ENCODE measurements at regions of chr22 and their contacts with region 1.

Region 1: GRCh38 chr22:36856121-36856791 is 4.5 kb upstream of the NCF4 start:
- DNase-seq: peak; percentile 95
- ATAC-seq: peak; percentile 46
- H3K4me3 Mint-ChIP-seq: no peak overlapping the region
- H3K27ac Mint-ChIP-seq: peak overlapping the region; percentile 3
- H3K4me1 Mint-ChIP-seq: peaks cover 24% of the 10 kb centered on the region
- H3K27me3 Mint-ChIP-seq: peaks cover 5% of the 10 kb centered on the region
- CTCF ChIP-seq: peak; percentile 100

Region 2: GRCh38 chr22:36606114-36606513 is 250.1 kb before region 1 on chr22:
- CTCF ChIA-PET with region 1: no interaction called
- POLR2A ChIA-PET with region 1: no interaction called
- intact Hi-C with region 1: no loop called
- DNase-seq: no peak
- ATAC-seq: no peak
- H3K4me3 Mint-ChIP-seq: no peak overlapping the region
- H3K27ac Mint-ChIP-seq: no peak overlapping the region
- H3K4me1 Mint-ChIP-seq: no peaks in the 10 kb centered on the region
- H3K27me3 Mint-ChIP-seq: peaks cover 27% of the 10 kb centered on the region
- CTCF ChIP-seq: no peak

Region 3: DNA sequence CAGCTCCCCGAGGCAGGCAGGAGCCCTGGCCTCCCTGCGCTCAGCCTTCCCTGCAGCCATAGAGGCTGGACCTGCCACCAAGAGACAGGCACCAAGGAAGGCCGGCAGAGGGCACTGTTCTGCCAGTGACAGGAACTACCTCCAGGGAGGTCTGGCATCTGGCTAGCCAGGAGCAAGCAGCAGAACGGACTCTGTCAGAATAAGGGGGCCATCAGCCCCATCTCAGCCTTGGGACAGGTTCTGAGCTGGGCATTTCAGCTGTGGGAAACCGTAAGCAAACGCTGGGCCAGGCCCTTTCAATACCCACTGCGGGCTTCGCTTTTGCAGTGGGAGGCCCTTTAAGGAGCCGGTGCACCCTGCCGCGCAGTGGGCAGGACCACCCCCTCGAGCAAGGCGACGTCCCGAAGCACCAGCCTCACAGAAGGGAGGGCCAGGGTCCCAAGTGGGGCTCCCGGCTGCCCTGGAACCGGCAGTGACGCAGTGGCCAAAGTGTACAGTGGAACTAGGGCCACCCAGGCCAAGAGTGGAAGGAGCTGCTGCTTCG is 98.5 kb before region 1 on chr22:
- CTCF ChIA-PET with region 1: interaction called, 29 read pairs
- POLR2A ChIA-PET with region 1: no interaction called
- intact Hi-C with region 1: no loop called
- DNase-seq: peak; percentile 90
- ATAC-seq: peak; percentile 98
- H3K4me3 Mint-ChIP-seq: no peak overlapping the region
- H3K27ac Mint-ChIP-seq: no peak overlapping the region
- H3K4me1 Mint-ChIP-seq: no peaks in the 10 kb centered on the region
- H3K27me3 Mint-ChIP-seq: peaks cover 1% of the 10 kb centered on the region
- CTCF ChIP-seq: peak; percentile 83

Region 4: GRCh38 chr22:36781656-36782627 is 74.3 kb before region 1 on chr22:
- CTCF ChIA-PET with region 1: interaction called, 129 read pairs
- POLR2A ChIA-PET with region 1: interaction called, 3 read pairs
- intact Hi-C with region 1: loop called (anchors 2 kb)
- DNase-seq: peak; percentile 95
- ATAC-seq: peak; percentile 98
- H3K4me3 Mint-ChIP-seq: peak overlapping the region; percentile 53
- H3K27ac Mint-ChIP-seq: peak overlapping the region; percentile 94
- H3K4me1 Mint-ChIP-seq: peaks cover 34% of the 10 kb centered on the region
- H3K27me3 Mint-ChIP-seq: no peaks in the 10 kb centered on the region
- CTCF ChIP-seq: peak; percentile 92

Region 5: DNA sequence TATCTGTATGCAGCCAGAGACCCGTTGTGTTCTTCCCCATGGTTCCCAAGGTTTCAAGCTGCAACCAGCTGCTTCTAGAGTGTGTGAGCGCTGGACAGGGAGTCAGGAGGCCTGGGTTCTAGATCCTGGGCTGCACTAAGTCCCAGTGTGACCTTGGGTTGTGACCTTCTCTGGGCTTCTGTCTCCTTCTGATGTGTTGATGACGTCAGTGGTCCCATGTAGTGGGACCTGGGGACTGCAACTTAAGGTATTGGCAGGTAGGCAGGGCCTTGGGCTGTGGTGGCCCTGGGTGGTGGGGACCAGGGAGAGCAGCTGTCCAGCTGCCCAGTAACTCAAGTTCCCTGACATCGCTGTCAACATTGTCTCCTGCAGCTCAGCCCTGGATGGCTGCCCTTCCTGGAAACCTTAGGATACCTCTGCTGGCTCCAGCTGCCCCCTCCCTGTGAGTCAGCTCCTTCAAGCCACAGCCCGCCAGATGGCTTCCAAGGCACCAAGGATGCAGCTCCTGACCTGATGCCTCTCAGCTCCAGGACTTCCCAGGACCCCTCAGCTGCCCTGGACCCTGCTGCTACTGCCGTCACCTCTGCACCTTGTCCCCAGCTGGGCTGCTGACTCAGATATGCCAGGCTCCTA is 38.1 kb before region 1 on chr22:
- CTCF ChIA-PET with region 1: interaction called, 16 read pairs
- POLR2A ChIA-PET with region 1: no interaction called
- intact Hi-C with region 1: no loop called
- DNase-seq: no peak
- ATAC-seq: no peak
- H3K4me3 Mint-ChIP-seq: no peak overlapping the region
- H3K27ac Mint-ChIP-seq: no peak overlapping the region
- H3K4me1 Mint-ChIP-seq: no peaks in the 10 kb centered on the region
- H3K27me3 Mint-ChIP-seq: peaks cover 53% of the 10 kb centered on the region
- CTCF ChIP-seq: no peak

Region 6: GRCh38 chr22:36840106-36840505 is 16.1 kb before region 1 on chr22:
- CTCF ChIA-PET with region 1: interaction called, 20 read pairs
- POLR2A ChIA-PET with region 1: interaction called, 4 read pairs
- intact Hi-C with region 1: no loop called
- DNase-seq: no peak
- ATAC-seq: no peak
- H3K4me3 Mint-ChIP-seq: no peak overlapping the region
- H3K27ac Mint-ChIP-seq: no peak overlapping the region
- H3K4me1 Mint-ChIP-seq: peaks cover 2% of the 10 kb centered on the region
- H3K27me3 Mint-ChIP-seq: peaks cover 36% of the 10 kb centered on the region
- CTCF ChIP-seq: no peak

Region 7: GRCh38 chr22:36884349-36885117 is 28.3 kb after region 1 on chr22:
- CTCF ChIA-PET with region 1: interaction called, 15 read pairs
- POLR2A ChIA-PET with region 1: no interaction called
- intact Hi-C with region 1: no loop called
- DNase-seq: no peak
- ATAC-seq: no peak
- H3K4me3 Mint-ChIP-seq: no peak overlapping the region
- H3K27ac Mint-ChIP-seq: no peak overlapping the region
- H3K4me1 Mint-ChIP-seq: peaks cover 16% of the 10 kb centered on the region
- H3K27me3 Mint-ChIP-seq: peaks cover 10% of the 10 kb centered on the region
- CTCF ChIP-seq: no peak

Region 8: DNA sequence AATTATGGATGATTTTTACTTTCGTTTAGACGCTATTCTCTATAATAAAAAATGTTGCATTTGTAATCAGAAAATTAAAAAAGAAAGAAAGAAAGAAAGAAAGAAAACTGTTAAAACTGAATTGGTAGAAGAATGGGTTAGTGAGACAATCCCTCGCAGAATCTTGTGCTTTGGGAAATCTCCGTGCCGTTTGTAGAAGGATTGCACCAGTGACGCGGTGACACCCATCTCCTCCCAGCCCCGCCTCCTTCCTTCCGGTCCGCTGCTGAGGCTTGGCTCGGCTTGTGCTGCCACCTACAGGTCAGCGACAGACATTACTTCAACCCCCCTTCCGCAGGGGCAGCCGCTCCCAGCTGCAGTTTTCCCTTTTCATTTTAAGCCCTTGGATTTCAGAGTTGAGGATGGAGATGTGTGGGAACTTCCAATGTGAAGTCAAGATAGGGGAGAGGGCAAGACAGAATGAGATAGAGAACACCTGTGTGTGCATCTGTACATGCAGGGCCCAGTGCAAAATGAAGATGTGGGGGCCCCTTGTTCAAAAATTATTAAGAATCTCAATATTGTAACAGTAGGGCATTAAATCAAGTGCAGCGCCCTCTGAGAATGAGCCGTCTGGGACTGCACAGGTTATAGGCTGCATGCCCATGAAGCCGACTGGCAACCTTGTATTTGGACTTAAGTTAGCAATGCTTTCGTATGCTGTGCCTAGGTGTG is 121.8 kb after region 1 on chr22:
- CTCF ChIA-PET with region 1: interaction called, 64 read pairs
- POLR2A ChIA-PET with region 1: no interaction called
- intact Hi-C with region 1: loop called (anchors 5 kb)
- DNase-seq: peak; percentile 94
- ATAC-seq: peak; percentile 87
- H3K4me3 Mint-ChIP-seq: peak overlapping the region; percentile 77
- H3K27ac Mint-ChIP-seq: peak overlapping the region; percentile 91
- H3K4me1 Mint-ChIP-seq: peaks cover 8% of the 10 kb centered on the region
- H3K27me3 Mint-ChIP-seq: peaks cover 2% of the 10 kb centered on the region
- CTCF ChIP-seq: peak; percentile 64

Measured in activated CD8-positive, alpha-beta T cell treated with anti-CD3 and anti-CD28 coated beads for 36 hours (primary cell).